Lower leg skin (tissue), 4 donors: ENCODE measurements at regions of chr6 and their contacts with region 1.

Region 1: GRCh38 chr6:161370880-161371279 is 97.0 kb upstream of the AGPAT4 start:
- DNase-seq: no peak
- H3K4me3 ChIP-seq: no peak overlapping the region
- CTCF ChIP-seq: no peak
- POLR2A ChIP-seq: no peak

Region 2: GRCh38 chr6:160733050-160733646 is 637.7 kb before region 1 on chr6:
- intact Hi-C with region 1: loop called (anchors 5 kb)
- DNase-seq: no peak
- H3K4me3 ChIP-seq: no peak overlapping the region
- CTCF ChIP-seq: no peak
- POLR2A ChIP-seq: no peak

Region 3: DNA sequence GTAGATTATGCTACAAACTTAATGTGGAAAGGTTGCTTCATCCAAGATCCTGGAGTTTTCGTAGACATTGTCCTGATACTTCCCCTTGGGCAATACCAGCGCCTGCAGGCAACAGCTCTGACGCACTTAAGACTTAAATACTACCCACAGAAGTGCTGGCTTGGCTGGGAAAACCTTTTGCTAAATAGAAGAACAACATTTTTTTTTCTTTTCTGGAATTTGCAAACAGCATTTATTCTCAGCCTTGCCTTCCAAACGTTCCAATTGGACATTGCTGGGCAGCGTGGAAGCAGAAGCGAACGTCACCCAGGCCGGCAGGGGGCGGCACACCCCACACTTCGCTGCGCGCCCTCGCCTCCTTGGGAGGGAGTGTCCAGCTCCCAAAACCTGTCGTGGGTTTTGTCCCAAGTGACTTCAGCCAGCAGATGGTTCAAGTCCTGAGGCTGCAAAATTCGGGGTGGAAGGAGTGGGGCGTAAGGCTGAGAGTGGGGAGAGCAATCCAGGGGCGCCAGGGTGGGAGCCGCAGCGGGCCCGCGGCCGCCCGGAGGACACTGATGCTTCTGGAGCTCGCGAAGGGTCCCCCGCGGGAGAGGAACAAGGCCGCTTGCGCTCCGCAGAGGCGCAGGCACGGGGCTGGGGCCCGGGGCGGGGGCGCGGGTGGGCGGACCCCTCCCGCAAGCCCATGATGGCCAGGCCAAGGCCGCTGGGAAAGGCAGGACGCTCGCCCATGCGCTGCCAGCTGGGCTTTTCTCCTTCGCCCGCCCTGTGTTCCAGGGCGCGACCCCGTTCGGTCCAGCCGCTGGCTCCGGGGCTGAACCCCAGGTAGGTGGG is 440.1 kb before region 1 on chr6:
- intact Hi-C with region 1: loop called (anchors 1 kb)
- DNase-seq: peak; percentile 71 to 95
- H3K4me3 ChIP-seq: peak overlapping the region; percentile 21
- CTCF ChIP-seq: peak in 1 of 3 donors; percentile 74
- POLR2A ChIP-seq: no peak

Region 4: DNA sequence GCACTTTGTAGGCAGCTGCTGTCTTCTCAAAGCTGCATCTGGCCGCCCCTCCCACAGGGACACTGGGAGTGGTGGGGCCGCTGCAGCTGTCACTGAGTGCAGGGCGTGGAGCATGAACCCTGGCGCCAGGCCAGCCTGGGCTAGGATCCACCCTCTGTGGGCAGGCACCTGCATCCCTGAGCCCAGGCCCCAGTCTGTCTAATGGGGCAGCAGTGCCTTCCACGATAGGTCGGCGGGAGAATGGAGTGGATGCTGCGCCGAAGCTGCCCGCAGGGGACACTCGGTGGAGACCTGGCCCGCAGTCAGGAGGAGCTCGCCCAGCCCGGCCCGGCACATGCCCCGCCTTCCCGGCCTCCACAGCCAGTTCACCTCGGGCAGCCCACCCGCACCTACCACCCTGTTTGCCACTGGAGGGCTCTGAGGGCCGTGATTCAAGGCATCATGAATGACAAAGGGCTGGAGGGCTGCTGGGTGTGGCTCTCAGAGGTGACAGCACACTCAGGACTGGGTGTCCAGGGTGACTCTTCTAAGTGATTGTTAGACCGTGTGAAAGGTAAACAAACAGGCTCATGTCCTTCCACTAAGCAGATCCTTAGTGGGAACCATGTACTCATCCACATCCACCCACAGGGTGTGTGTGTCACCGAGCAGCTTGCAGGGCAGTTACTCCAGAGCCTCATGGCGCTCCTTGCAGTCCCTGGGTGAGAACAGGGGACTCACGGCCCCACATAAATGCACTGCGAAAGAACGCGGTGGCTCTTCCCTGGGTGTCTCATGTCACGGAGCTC is 230.9 kb before region 1 on chr6:
- intact Hi-C with region 1: loop called (anchors 10 kb)
- DNase-seq: peak in 1 of 2 donors; percentile 90
- H3K4me3 ChIP-seq: no peak overlapping the region
- CTCF ChIP-seq: no peak
- POLR2A ChIP-seq: no peak

Region 5: DNA sequence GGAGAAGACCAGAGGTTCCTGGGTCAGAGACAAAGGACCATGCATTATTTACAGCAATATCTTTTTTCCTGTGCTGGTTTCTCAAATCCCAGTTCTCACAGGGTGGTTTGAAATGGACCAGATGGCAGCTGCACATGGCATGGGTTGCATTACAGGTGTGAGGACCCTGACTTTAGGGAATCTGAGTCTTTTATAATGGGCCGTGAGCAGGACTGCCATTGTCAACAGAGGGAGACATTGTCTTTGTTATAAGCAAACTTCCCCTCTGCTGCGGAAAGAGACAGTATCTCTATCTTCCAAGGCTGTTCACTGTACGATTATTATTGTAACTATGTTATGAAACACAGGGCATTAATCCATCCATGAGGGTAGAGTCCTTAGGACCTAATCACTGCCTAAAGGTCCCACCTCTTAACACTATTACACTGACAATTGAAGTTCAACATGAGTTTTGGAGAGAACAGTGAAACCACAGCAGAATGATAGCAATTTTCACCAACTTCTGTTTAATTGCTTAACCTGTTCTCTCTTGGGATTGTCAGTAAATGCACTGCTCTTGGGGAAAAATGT is 59.1 kb after region 1 on chr6:
- intact Hi-C with region 1: no loop called
- DNase-seq: no peak
- H3K4me3 ChIP-seq: no peak overlapping the region
- CTCF ChIP-seq: no peak
- POLR2A ChIP-seq: no peak

Region 6: DNA sequence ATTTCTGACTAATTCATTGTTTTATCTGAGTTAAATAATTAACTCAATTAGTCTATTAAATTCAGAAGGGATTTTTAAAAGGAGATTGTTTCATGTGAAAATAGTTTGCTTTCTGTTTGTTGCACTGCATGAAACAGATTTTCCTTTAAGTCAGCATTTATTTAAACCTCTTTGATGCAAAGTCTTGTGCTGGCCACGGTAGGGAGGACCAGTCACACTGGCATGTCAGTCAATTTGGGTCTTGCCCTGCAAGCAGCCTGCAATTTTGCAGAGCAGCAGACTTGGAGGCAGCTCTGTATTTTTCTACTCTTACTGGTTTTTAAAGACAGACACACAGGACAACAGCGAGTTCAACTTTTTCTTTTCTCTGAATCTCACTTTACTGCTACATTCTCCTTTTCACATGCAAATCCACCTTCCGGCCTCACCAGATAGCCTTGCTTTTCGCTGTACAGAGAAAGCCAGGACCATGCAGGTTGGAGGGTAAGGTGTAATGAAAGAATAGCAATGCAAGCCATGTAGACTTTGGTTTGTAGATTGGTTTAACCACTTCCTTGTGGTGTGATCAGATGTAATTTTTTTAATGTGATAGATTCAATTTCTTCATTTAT is 592.9 kb after region 1 on chr6:
- intact Hi-C with region 1: no loop called
- DNase-seq: no peak
- H3K4me3 ChIP-seq: no peak overlapping the region
- CTCF ChIP-seq: no peak
- POLR2A ChIP-seq: no peak